ENCODE measurements at regions of chr12 and their contacts with region 1.

Region 1: GRCh38 chr12:47032644-47033043 is 46.8 kb upstream of the PCED1B start:
- DNase-seq: peak; percentile 78
- ATAC-seq: peak; percentile 81
- H3K4me3 ChIP-seq: no peak overlapping the region
- H3K4me3 Mint-ChIP-seq: no peak overlapping the region
- H3K27ac ChIP-seq: no peak overlapping the region
- H3K27ac Mint-ChIP-seq: no peak overlapping the region
- H3K4me1 ChIP-seq: peaks cover 0 to 3% of the 10 kb centered on the region in 2 donors
- H3K4me1 Mint-ChIP-seq: peaks cover 8% of the 10 kb centered on the region
- H3K27me3 ChIP-seq: no peaks in the 10 kb centered on the region
- H3K27me3 Mint-ChIP-seq: no peaks in the 10 kb centered on the region
- CTCF ChIP-seq: peak; percentile 77

Region 2: DNA sequence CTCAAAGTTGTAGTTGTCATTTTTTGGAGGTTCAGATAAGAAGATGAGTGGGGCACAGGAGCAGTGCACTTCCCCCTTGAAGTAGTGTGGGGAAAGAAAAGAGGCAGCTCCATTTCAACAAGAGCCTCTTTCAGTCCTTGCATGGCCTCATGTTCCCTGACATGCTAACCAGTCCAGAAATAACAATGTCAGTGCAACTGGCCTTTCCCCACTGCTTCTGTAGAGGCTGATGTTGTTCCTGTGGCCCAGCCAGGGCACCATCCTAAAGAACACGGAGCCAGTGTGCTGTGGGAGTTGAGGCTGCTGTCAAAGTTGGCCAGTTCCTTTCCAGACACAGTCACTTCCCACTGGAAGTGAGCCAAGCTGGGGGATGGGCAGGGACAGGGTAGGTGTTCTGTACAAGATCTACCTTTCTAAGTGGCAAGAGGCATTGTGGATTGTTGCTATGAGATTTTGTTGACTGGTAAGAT is 582.3 kb before region 1 on chr12:
- CTCF ChIA-PET with region 1: no interaction called
- POLR2A ChIA-PET with region 1: no interaction called
- intact Hi-C with region 1: no loop called
- DNase-seq: no peak
- ATAC-seq: no peak
- H3K4me3 ChIP-seq: no peak overlapping the region
- H3K4me3 Mint-ChIP-seq: no peak overlapping the region
- H3K27ac ChIP-seq: no peak overlapping the region
- H3K27ac Mint-ChIP-seq: no peak overlapping the region
- H3K4me1 ChIP-seq: peaks cover 6 to 14% of the 10 kb centered on the region in 2 donors
- H3K4me1 Mint-ChIP-seq: peaks cover 15% of the 10 kb centered on the region
- H3K27me3 ChIP-seq: no peaks in the 10 kb centered on the region
- H3K27me3 Mint-ChIP-seq: no peaks in the 10 kb centered on the region
- CTCF ChIP-seq: no peak

Region 3: GRCh38 chr12:46998811-46999368 is 33.8 kb before region 1 on chr12:
- CTCF ChIA-PET with region 1: no interaction called
- POLR2A ChIA-PET with region 1: no interaction called
- intact Hi-C with region 1: no loop called
- DNase-seq: no peak
- ATAC-seq: no peak
- H3K4me3 ChIP-seq: no peak overlapping the region
- H3K4me3 Mint-ChIP-seq: no peak overlapping the region
- H3K27ac ChIP-seq: no peak overlapping the region
- H3K27ac Mint-ChIP-seq: no peak overlapping the region
- H3K4me1 ChIP-seq: no peaks in the 10 kb centered on the region
- H3K4me1 Mint-ChIP-seq: no peaks in the 10 kb centered on the region
- H3K27me3 ChIP-seq: peaks cover 0 to 2% (median 0%) of the 10 kb centered on the region in 4 experiments
- H3K27me3 Mint-ChIP-seq: peaks cover 4% of the 10 kb centered on the region
- CTCF ChIP-seq: no peak

Region 4: GRCh38 chr12:47079468-47079980 is 46.9 kb after region 1 on chr12 and contains the starts of genes AMIGO2 and PCED1B:
- CTCF ChIA-PET with region 1: interaction called, 21 read pairs
- POLR2A ChIA-PET with region 1: interaction called, 3 read pairs
- intact Hi-C with region 1: loop called (anchors 5 kb)
- DNase-seq: peak; percentile 68
- ATAC-seq: peak; percentile 50
- H3K4me3 ChIP-seq: peak within 1 kb of the TSS; percentile 74 to 92 (median 83)
- H3K4me3 Mint-ChIP-seq: peak within 1 kb of the TSS; percentile 98
- H3K27ac ChIP-seq: peak within 1 kb of the TSS; percentile 53 to 78
- H3K27ac Mint-ChIP-seq: peak within 1 kb of the TSS; percentile 91
- H3K4me1 ChIP-seq: peaks cover 17 to 29% of the 10 kb centered on the region in 2 donors
- H3K4me1 Mint-ChIP-seq: peaks cover 59% of the 10 kb centered on the region
- H3K27me3 ChIP-seq: no peaks in the 10 kb centered on the region
- H3K27me3 Mint-ChIP-seq: no peaks in the 10 kb centered on the region
- CTCF ChIP-seq: no peak
- total RNA-seq, gene AMIGO2: 9.2 and 10.4 TPM in 2 replicates
- total RNA-seq, gene PCED1B: 45.8 and 48.0 TPM in 2 replicates

Region 5: GRCh38 chr12:47302111-47302671 is 269.5 kb after region 1 on chr12:
- CTCF ChIA-PET with region 1: interaction called, 62 read pairs
- POLR2A ChIA-PET with region 1: no interaction called
- intact Hi-C with region 1: loop called (anchors 1 kb)
- DNase-seq: no peak
- ATAC-seq: peak; percentile 56
- H3K4me3 ChIP-seq: no peak overlapping the region
- H3K4me3 Mint-ChIP-seq: peak overlapping the region; percentile 15
- H3K27ac ChIP-seq: no peak overlapping the region
- H3K27ac Mint-ChIP-seq: peak overlapping the region; percentile 66
- H3K4me1 ChIP-seq: peaks cover 4 to 21% of the 10 kb centered on the region in 2 donors
- H3K4me1 Mint-ChIP-seq: peaks cover 63% of the 10 kb centered on the region
- H3K27me3 ChIP-seq: no peaks in the 10 kb centered on the region
- H3K27me3 Mint-ChIP-seq: no peaks in the 10 kb centered on the region
- CTCF ChIP-seq: no peak

Region 6: GRCh38 chr12:47361389-47362021 is 328.9 kb after region 1 on chr12:
- CTCF ChIA-PET with region 1: interaction called, 10 read pairs
- POLR2A ChIA-PET with region 1: no interaction called
- intact Hi-C with region 1: no loop called
- DNase-seq: peak; percentile 76
- ATAC-seq: peak; percentile 51
- H3K4me3 ChIP-seq: peak overlapping the region; percentile 24 to 52 (median 47)
- H3K4me3 Mint-ChIP-seq: peak overlapping the region; percentile 87
- H3K27ac ChIP-seq: peak overlapping the region; percentile 93 to 96
- H3K27ac Mint-ChIP-seq: peak overlapping the region; percentile 98
- H3K4me1 ChIP-seq: peaks cover 71% of the 10 kb centered on the region in 2 donors
- H3K4me1 Mint-ChIP-seq: peaks cover 62% of the 10 kb centered on the region
- H3K27me3 ChIP-seq: no peaks in the 10 kb centered on the region
- H3K27me3 Mint-ChIP-seq: no peaks in the 10 kb centered on the region
- CTCF ChIP-seq: no peak

Region 7: GRCh38 chr12:47651368-47652254 is 619.0 kb after region 1 on chr12:
- CTCF ChIA-PET with region 1: interaction called, 29 read pairs
- POLR2A ChIA-PET with region 1: no interaction called
- intact Hi-C with region 1: loop called (anchors 1 kb)
- DNase-seq: peak; percentile 66
- ATAC-seq: peak; percentile 83
- H3K4me3 ChIP-seq: no peak overlapping the region
- H3K4me3 Mint-ChIP-seq: no peak overlapping the region
- H3K27ac ChIP-seq: no peak overlapping the region
- H3K27ac Mint-ChIP-seq: no peak overlapping the region
- H3K4me1 ChIP-seq: peaks cover 0 to 12% of the 10 kb centered on the region in 2 donors
- H3K4me1 Mint-ChIP-seq: peaks cover 13% of the 10 kb centered on the region
- H3K27me3 ChIP-seq: no peaks in the 10 kb centered on the region
- H3K27me3 Mint-ChIP-seq: no peaks in the 10 kb centered on the region
- CTCF ChIP-seq: peak; percentile 82

Region 8: GRCh38 chr12:48061948-48062719 is 1029.5 kb after region 1 on chr12:
- CTCF ChIA-PET with region 1: no interaction called
- POLR2A ChIA-PET with region 1: no interaction called
- intact Hi-C with region 1: no loop called
- DNase-seq: no peak
- ATAC-seq: no peak
- H3K4me3 ChIP-seq: no peak overlapping the region
- H3K4me3 Mint-ChIP-seq: no peak overlapping the region
- H3K27ac ChIP-seq: no peak overlapping the region
- H3K27ac Mint-ChIP-seq: no peak overlapping the region
- H3K4me1 ChIP-seq: no peaks in the 10 kb centered on the region
- H3K4me1 Mint-ChIP-seq: no peaks in the 10 kb centered on the region
- H3K27me3 ChIP-seq: no peaks in the 10 kb centered on the region
- H3K27me3 Mint-ChIP-seq: no peaks in the 10 kb centered on the region
- CTCF ChIP-seq: no peak

Measured in B cell (primary cell).